ENCODE measurements at regions of chr1 and their contacts with region 1.

Region 1: DNA sequence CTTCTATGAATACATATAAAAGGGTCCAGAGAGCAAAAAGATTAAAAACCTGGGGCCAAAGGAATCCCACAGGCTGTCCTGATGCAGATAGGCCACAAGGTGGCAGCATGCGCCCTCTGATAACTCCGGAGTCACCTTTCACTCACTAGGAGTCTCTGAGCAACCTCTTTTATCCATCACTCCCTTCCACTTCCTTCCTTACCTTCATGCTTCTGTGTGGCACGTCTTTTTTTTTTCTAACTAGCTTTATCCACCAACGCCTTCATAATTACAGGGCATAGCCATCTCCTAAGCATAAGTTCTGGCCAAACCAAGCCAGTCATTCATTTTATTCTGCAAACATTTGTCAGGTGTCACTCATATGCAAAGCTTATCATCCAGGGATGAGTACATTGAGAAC is 3.9 kb upstream of the PGLYRP4 start:
- DNase-seq: peak; percentile 72 to 87
- H3K4me3 ChIP-seq: no peak overlapping the region
- H3K27ac ChIP-seq: no peak overlapping the region
- H3K4me1 ChIP-seq: no peaks in the 10 kb centered on the region
- H3K27me3 ChIP-seq: peaks cover 0 to 67% (median 16%) of the 10 kb centered on the region in 3 donors
- CTCF ChIP-seq: peak in 5 of 7 experiments; percentile 65 to 85 (median 82)
- EP300 ChIP-seq: no peak
- POLR2A ChIP-seq: no peak

Region 2: GRCh38 chr1:153494976-153495535 is 142.5 kb after region 1 on chr1:
- intact Hi-C with region 1: loop called (anchors 5 kb)
- DNase-seq: peak; percentile 76 to 87
- H3K4me3 ChIP-seq: no peak overlapping the region
- H3K27ac ChIP-seq: no peak overlapping the region
- H3K4me1 ChIP-seq: peaks cover 0 to 12% (median 5%) of the 10 kb centered on the region in 4 donors
- H3K27me3 ChIP-seq: peaks cover 0 to 18% (median 0%) of the 10 kb centered on the region in 3 donors
- CTCF ChIP-seq: peak in 5 of 7 experiments; percentile 84 to 94 (median 94)
- EP300 ChIP-seq: no peak
- POLR2A ChIP-seq: no peak

Region 3: GRCh38 chr1:153633716-153634665 is 281.5 kb after region 1 on chr1 and contains the start of gene CHTOP:
- intact Hi-C with region 1: no loop called
- DNase-seq: peak; percentile 99
- H3K4me3 ChIP-seq: peak within 1 kb of the TSS; percentile 63 to 92 (median 76)
- H3K27ac ChIP-seq: peak within 1 kb of the TSS; percentile 98 to 100 (median 99)
- H3K4me1 ChIP-seq: peaks cover 40 to 63% (median 48%) of the 10 kb centered on the region in 4 donors
- H3K27me3 ChIP-seq: no peaks in the 10 kb centered on the region
- CTCF ChIP-seq: peak in 1 of 7 experiments; percentile 2
- EP300 ChIP-seq: peak; percentile 52
- POLR2A ChIP-seq: peak in 2 of 4 donors; percentile 11 to 40
- total RNA-seq, gene CHTOP: 21.7 to 111 (median 74.3) TPM